Activated CD4-positive, alpha-beta memory T cell treated with anti-CD3 and anti-CD28 coated beads, Interleukin-2, amount 10 ng/mL, durations not matched to agents 7 days and 5 days (primary cell): ENCODE measurements at regions of chr1 and their contacts with region 1.

Region 1: DNA sequence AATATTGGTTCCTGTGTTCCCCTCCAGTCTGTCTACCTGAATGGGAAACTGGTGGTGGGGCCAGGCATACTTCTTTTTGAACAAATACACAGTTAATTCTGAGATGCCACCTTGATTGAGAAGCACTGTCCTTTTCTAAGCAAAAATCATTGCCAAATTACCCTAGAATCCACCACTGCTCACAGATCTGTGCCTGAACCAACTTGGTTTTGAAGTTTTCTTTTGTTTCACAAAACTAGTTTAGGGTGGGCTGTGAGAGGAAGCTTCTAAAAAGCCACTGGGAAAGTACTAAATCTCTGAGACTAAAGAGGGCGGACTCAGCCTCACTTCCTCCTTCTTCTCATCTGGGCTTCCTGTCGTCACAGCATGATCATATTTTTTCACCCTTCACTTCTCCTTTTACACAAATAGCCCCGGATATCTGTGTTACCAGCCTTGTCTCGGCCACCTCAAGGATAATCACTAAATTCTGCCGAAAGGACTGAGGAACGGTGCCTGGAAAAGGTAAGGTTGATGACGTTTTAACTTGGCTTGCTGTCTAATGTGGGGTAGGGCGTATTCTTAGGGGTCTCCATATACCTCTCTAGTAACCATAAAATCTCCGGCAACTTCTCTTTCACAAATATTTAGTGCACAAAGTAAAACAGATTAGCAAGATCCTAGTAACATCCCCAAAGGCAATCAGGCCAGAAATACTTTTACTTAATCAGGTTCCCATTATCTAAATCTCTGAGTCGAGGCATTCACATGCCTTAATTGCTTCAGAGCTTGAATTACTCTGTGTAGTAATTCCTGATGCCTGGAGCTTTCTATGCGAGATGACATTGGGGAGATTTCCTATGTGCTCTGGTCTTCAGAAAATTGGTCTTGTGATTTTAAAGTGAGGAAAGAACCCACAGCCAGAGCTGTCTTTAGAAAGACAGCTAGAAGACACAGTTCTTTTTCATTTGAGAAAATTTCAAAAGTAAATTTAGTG is at the start of gene CD53:
- DNase-seq: peak; percentile 64
- H3K4me3 Mint-ChIP-seq: peak within 1 kb of the TSS; percentile 97
- H3K27ac Mint-ChIP-seq: peak within 1 kb of the TSS; percentile 97
- H3K4me1 Mint-ChIP-seq: peaks cover 34% of the 10 kb centered on the region
- H3K27me3 Mint-ChIP-seq: no peaks in the 10 kb centered on the region
- total RNA-seq, gene CD53: 657 to 659 TPM

Region 2: GRCh38 chr1:110645821-110646735 is 227.0 kb before region 1 on chr1:
- CTCF ChIA-PET with region 1: no interaction called
- POLR2A ChIA-PET with region 1: interaction called, 49 read pairs
- DNase-seq: no peak
- H3K4me3 Mint-ChIP-seq: peak overlapping the region; percentile 1
- H3K27ac Mint-ChIP-seq: no peak overlapping the region
- H3K4me1 Mint-ChIP-seq: peaks cover 47% of the 10 kb centered on the region
- H3K27me3 Mint-ChIP-seq: no peaks in the 10 kb centered on the region

Region 3: DNA sequence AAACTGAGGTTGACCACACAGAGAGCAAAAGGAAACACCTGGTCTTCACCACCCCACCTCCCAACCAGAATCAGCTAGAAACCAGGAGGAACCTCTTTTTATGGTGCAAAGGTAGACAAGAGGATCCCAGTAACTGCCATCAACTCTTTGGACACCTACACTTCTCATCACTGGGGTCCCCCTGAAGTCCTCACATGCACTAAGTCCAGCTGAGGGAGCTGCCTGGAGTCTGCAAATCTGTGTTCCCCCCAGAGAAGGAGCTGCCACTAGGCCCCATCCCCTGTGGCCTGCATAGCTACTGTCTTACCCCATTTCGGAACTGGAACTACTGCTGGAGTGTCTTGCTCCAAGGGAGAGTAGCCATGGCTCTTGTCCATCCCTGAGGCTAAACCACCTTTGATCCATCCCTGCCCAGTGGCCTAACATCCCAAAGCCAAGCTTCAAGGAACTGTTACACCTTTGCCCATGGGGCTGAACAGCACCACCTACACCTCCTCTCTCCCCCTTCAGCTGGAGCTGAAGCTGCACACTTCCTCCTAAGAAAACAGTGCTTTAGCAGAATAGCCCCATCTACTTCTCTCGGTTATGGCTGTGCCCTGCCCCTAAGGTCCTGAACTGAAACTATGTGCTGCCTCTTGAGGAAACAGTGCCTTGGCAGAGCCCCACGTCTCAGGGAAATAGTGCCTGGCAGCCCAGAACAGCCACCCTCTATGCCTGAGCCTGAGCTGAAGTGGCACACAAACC is 85.5 kb before region 1 on chr1:
- CTCF ChIA-PET with region 1: interaction called, 15 read pairs
- POLR2A ChIA-PET with region 1: interaction called, 170 read pairs
- DNase-seq: peak; percentile 73
- H3K4me3 Mint-ChIP-seq: peak overlapping the region; percentile 57
- H3K27ac Mint-ChIP-seq: peak overlapping the region; percentile 93
- H3K4me1 Mint-ChIP-seq: peaks cover 62% of the 10 kb centered on the region
- H3K27me3 Mint-ChIP-seq: peaks cover 3% of the 10 kb centered on the region

Region 4: GRCh38 chr1:110903853-110904484 is 30.9 kb after region 1 on chr1:
- CTCF ChIA-PET with region 1: no interaction called
- POLR2A ChIA-PET with region 1: interaction called, 29 read pairs
- DNase-seq: no peak
- H3K4me3 Mint-ChIP-seq: no peak overlapping the region
- H3K27ac Mint-ChIP-seq: no peak overlapping the region
- H3K4me1 Mint-ChIP-seq: peaks cover 6% of the 10 kb centered on the region
- H3K27me3 Mint-ChIP-seq: no peaks in the 10 kb centered on the region

Region 5: DNA sequence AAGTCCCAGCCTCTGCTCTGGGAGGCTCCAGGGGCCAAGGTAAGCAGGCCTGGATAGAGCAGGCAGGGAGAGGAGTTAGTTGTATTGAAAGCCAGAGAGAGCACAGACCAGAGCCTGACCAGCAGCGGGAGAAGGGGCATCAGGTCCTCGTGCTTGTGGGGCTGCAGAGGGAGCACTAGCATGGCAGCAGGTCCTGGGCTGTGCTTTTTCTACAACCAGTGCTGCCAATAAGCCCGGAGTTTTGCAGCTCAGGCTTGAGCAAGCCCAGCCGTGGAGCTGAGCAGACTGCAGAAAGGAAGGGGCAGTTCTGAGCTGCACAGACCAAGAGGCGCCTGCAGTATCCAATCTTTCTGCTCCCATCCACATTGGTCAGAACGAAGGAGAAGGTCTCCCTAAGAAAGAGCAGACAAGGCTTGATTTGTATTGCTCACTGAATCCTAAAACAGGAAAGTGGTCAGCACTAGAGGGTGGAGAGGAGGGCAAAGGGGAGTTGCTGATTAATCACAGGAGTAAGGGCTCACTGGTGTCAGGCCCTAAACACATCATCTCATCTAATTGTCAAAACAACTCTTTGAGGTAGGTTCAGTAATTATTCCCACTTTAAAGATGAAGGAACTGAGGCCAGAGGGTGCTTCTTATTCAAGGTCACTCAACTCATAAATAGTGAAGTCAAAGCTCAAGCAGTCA is 324.7 kb after region 1 on chr1:
- CTCF ChIA-PET with region 1: no interaction called
- POLR2A ChIA-PET with region 1: interaction called, 24 read pairs
- DNase-seq: peak; percentile 71
- H3K4me3 Mint-ChIP-seq: peak overlapping the region; percentile 96
- H3K27ac Mint-ChIP-seq: peak overlapping the region; percentile 93
- H3K4me1 Mint-ChIP-seq: peaks cover 77% of the 10 kb centered on the region
- H3K27me3 Mint-ChIP-seq: no peaks in the 10 kb centered on the region

Region 6: DNA sequence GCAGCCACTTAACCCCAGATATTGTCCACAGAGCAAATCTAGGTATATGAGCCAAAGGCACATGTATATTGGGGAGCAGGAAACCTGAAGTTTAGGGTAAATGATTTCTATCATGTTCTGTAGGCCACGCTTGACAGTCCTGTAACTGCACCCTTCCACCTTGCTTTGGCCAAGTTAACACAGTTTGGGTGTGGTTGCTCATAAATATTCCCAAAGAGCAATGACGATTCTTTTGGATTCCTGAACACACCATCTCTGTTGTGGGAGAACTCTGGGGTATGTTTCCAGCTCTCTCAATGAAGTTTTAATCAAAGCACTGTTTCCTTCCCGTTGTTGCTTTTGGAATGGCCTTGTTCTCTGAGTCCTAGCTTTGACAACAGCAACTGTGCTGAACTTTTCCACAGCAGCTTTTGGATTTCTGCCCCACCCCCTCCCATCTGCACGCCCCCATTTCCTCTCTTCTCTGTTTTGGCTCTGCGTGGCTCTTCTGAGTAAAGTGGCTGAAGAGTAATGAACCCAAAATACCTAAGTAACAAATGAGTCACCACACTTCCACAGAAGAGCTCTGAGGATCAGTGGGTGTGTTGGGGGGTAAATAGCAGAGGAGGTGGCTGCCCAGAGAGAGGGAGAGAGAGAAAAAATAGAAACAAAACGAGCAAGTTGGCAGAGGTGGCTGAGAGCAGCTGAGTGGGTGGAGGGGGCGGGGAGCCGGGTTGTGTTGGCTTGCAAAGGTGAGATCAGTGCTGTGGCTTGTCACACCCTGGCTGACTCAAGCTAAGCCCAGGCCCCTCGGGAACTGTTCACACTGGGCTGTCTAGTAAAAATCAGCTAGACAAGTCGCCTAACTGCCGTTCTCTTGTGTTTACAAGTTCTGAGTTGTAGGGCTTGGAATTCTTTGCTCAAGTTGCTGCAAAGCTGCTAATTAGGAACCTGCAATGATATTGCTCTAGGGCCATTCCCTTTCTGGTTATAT is 719.6 kb after region 1 on chr1:
- CTCF ChIA-PET with region 1: no interaction called
- POLR2A ChIA-PET with region 1: interaction called, 19 read pairs
- DNase-seq: peak; percentile 97
- H3K4me3 Mint-ChIP-seq: peak overlapping the region; percentile 57
- H3K27ac Mint-ChIP-seq: peak overlapping the region; percentile 82
- H3K4me1 Mint-ChIP-seq: peaks cover 73% of the 10 kb centered on the region
- H3K27me3 Mint-ChIP-seq: no peaks in the 10 kb centered on the region